ENCODE measurements at regions of chr3 and their contacts with region 1.

Region 1: GRCh38 chr3:14261229-14261628 is 82.6 kb downstream of the LSM3 start:
- DNase-seq: peak; percentile 81 to 90 (median 85)
- ATAC-seq: peak; percentile 79 to 90 (median 88)
- H3K4me3 ChIP-seq: no peak overlapping the region
- H3K27ac ChIP-seq: no peak overlapping the region
- H3K4me1 ChIP-seq: peaks cover 0 to 10% (median 1%) of the 10 kb centered on the region in 12 donors
- H3K27me3 ChIP-seq: peaks cover 0 to 7% (median 3%) of the 10 kb centered on the region in 9 donors
- CTCF ChIP-seq: peak; percentile 93 to 99 (median 96)
- POLR2A ChIP-seq: no peak

Region 2: GRCh38 chr3:14188041-14188754 is 73.0 kb before region 1 on chr3:
- intact Hi-C with region 1: no loop called
- DNase-seq: no peak
- ATAC-seq: no peak
- H3K4me3 ChIP-seq: no peak overlapping the region
- H3K27ac ChIP-seq: no peak overlapping the region
- H3K4me1 ChIP-seq: peaks cover 0 to 1% (median 0%) of the 10 kb centered on the region in 12 donors
- H3K27me3 ChIP-seq: no peaks in the 10 kb centered on the region
- CTCF ChIP-seq: no peak
- POLR2A ChIP-seq: no peak

Region 3: DNA sequence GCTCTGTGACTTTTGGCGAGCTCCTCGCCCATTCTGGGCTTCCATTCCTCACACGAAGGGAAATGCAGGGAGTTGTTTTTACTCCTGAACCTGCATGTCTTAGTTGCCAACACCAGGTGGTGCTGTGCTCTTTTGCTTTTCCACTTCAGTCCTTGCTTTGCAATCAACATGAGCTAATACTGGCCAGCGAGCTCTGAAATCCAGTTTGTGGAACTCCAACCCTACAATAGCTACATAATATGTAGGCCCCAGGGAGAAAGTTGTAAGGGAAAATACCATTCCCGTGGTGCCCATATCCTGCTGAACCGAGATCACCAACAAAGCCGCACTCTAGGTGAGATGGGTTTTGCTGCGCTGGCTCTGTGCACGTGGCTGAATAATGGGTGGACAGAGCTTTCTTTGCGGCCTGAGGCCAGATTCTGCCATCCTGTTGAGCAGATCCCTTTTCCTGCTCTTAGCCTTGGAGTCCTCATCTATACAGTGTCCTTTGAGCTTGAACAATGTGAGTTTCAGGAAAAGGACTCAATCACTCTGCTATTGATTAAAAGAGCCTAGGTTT is 57.6 kb before region 1 on chr3:
- intact Hi-C with region 1: loop called in 9 of 10 experiments (anchors 1 to 10 kb)
- DNase-seq: peak in 4 of 5 donors; percentile 58 to 72 (median 64)
- ATAC-seq: peak; percentile 62 to 78 (median 71)
- H3K4me3 ChIP-seq: no peak overlapping the region
- H3K27ac ChIP-seq: peak overlapping the region in 7 of 12 donors; percentile 9 to 88 (median 80)
- H3K4me1 ChIP-seq: peaks cover 0 to 39% (median 25%) of the 10 kb centered on the region in 12 donors
- H3K27me3 ChIP-seq: no peaks in the 10 kb centered on the region
- CTCF ChIP-seq: peak; percentile 74 to 90 (median 85)
- POLR2A ChIP-seq: no peak

Region 4: GRCh38 chr3:14391033-14391432 is 129.8 kb after region 1 on chr3:
- intact Hi-C with region 1: loop called in 1 of 10 experiments (anchors 5 kb)
- DNase-seq: peak in 2 of 5 donors; percentile 57 to 71
- ATAC-seq: peak in 3 of 4 donors; percentile 31 to 74 (median 72)
- H3K4me3 ChIP-seq: no peak overlapping the region
- H3K27ac ChIP-seq: no peak overlapping the region
- H3K4me1 ChIP-seq: peaks cover 0 to 15% (median 1%) of the 10 kb centered on the region in 12 donors
- H3K27me3 ChIP-seq: peaks cover 0 to 12% (median 0%) of the 10 kb centered on the region in 9 donors
- CTCF ChIP-seq: no peak
- POLR2A ChIP-seq: no peak

Region 5: GRCh38 chr3:14402304-14402811 is 141.1 kb after region 1 on chr3 and contains the start of gene SLC6A6:
- intact Hi-C with region 1: loop called in 2 of 10 experiments (anchors 10 kb)
- DNase-seq: peak; percentile 89 to 97 (median 94)
- ATAC-seq: peak; percentile 70 to 84 (median 79)
- H3K4me3 ChIP-seq: peak within 1 kb of the TSS; percentile 62 to 92 (median 81)
- H3K27ac ChIP-seq: peak within 1 kb of the TSS; percentile 43 to 96 (median 86)
- H3K4me1 ChIP-seq: peaks cover 0 to 51% (median 29%) of the 10 kb centered on the region in 12 donors
- H3K27me3 ChIP-seq: peaks cover 0 to 5% (median 0%) of the 10 kb centered on the region in 9 donors
- CTCF ChIP-seq: peak in 8 of 12 donors; percentile 4 to 58 (median 43)
- POLR2A ChIP-seq: peak in 1 of 2 donors; percentile 83
- total RNA-seq, gene SLC6A6: 17.5 to 101 (median 34.9) TPM

Region 6: DNA sequence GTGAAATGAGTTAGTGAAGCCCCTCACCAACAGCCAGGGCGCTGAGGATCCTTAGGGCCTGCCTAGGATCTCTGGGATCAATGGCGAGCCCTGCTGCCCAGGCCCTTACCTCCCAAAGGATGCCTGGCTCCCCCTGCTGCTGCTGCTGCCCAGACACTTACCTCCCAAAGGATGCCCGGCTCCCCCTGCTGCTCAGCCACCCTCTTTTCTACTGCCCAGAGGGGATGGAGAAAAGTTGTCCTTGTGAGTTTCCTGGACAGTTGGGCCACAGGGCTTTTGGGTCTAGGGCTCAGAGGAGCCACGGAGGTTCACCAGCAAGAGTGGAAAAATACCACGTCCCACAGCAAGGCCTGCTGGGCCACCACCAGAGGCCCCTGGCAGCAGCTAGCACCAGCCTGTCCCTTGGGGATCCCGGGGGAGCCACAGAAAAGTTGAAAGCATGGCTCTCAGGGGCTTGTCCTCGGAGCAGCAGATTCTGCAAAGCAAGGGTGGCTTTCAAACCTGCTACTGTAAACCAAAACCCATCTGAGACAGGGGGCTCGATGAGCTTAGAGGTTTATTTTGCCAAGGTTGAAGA is 200.6 kb after region 1 on chr3:
- intact Hi-C with region 1: loop called in 3 of 10 experiments (anchors 2 kb)
- DNase-seq: peak; percentile 48 to 74 (median 60)
- ATAC-seq: peak in 3 of 4 donors; percentile 44 to 48 (median 45)
- H3K4me3 ChIP-seq: no peak overlapping the region
- H3K27ac ChIP-seq: peak overlapping the region in 3 of 12 donors; percentile 5 to 16 (median 14)
- H3K4me1 ChIP-seq: peaks cover 0 to 51% (median 19%) of the 10 kb centered on the region in 12 donors
- H3K27me3 ChIP-seq: peaks cover 0 to 8% (median 0%) of the 10 kb centered on the region in 9 donors
- CTCF ChIP-seq: peak; percentile 22 to 65 (median 50)
- POLR2A ChIP-seq: no peak

Region 7: DNA sequence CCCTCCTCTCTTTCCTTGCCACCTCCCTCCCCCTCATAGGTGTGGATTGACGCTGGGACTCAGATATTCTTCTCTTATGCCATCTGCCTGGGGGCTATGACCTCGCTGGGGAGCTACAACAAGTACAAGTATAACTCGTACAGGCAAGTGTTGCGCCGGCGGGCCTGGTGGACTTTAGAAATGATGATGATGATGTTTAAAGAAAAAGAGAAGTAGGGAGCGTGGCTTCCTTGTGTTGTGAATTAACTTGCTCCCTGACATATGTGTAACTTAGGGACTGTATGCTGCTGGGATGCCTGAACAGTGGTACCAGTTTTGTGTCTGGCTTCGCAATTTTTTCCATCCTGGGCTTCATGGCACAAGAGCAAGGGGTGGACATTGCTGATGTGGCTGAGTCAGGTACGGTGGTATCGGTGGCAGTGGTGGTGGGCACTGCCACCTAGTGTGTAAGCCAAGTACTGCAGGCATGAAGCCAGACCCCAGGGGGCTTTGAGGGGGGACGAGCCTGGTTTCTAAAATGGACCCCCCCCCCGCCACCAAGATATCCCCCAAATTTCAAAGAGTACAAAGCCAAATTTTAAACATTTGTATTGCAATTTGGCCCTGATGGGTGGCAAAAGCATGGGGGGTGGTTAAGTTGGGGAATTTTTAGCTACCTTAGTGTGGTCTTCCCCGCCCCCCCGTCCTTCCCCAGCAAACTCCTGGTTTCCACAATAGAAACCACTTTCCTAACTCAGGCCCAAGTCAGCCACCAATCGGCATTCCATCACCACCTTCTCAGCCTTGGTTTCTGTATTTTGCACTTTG is 206.8 kb after region 1 on chr3:
- intact Hi-C with region 1: loop called in 9 of 10 experiments (anchors 1 to 2 kb)
- DNase-seq: peak in 1 of 5 donors; percentile 30
- ATAC-seq: peak in 2 of 4 donors; percentile 48 to 53
- H3K4me3 ChIP-seq: no peak overlapping the region
- H3K27ac ChIP-seq: no peak overlapping the region
- H3K4me1 ChIP-seq: peaks cover 0 to 25% (median 0%) of the 10 kb centered on the region in 12 donors
- H3K27me3 ChIP-seq: peaks cover 0 to 5% (median 0%) of the 10 kb centered on the region in 9 donors
- CTCF ChIP-seq: peak; percentile 77 to 94 (median 89)
- POLR2A ChIP-seq: no peak

Region 8: GRCh38 chr3:14548321-14548729 is 287.1 kb after region 1 on chr3:
- intact Hi-C with region 1: loop called in 6 of 10 experiments (anchors 1 to 5 kb)
- DNase-seq: peak; percentile 68 to 88 (median 80)
- ATAC-seq: peak; percentile 83 to 91 (median 88)
- H3K4me3 ChIP-seq: no peak overlapping the region
- H3K27ac ChIP-seq: peak overlapping the region in 3 of 12 donors; percentile 14 to 64 (median 59)
- H3K4me1 ChIP-seq: peaks cover 0 to 28% (median 10%) of the 10 kb centered on the region in 12 donors
- H3K27me3 ChIP-seq: no peaks in the 10 kb centered on the region
- CTCF ChIP-seq: peak; percentile 64 to 86 (median 77)
- POLR2A ChIP-seq: no peak

Measured in heart left ventricle (tissue), 16 donors.